CD8-positive, alpha-beta T cell (primary cell): ENCODE measurements at regions of chr6 and their contacts with region 1.

Region 1: DNA sequence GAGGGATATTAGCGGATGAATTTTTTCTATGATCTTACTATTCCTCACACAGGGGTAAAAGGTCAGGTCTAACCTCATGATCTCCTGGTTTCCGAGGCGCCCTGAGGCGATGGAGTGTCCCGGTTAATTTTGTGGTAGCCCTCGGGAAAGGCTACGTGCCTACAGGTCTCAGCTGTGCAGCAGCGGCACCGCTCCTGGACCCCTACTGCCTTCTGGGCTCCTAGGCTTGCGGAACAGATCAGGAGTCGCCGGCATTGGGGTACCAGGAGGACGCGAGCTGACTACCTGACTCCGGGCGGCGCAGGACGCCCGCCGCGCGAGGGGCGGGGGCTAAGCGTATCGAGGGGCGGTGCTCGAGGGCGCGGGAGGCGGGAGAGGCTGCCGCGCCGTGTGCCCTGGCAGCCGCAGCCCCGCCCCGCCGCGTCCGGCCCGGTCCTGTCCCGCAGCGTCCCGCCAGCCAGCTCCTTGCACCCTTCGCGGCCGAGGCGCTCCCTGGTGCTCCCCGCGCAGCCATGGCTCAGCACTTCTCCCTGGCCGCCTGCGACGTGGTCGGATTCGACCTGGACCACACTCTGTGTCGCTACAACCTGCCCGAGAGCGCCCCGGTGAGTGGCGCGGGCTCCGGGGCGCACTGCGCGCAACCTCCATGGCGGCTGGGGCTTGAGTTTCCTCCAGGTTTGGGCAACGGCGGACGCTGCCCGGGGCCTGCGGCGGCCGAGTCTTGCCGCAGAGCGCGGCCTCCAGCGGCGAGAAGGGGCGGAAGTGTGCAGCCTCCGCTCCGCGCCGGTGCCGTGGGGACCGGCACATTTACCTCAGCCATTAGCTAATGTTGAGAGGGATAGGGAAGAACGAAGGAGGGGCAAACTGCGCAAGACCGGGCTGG is at the start of gene NT5DC1:
- DNase-seq: peak; percentile 67 to 91 (median 83)
- ATAC-seq: peak; percentile 93
- H3K4me3 ChIP-seq: peak within 1 kb of the TSS; percentile 74 to 87
- H3K4me3 Mint-ChIP-seq: peak within 1 kb of the TSS; percentile 93
- H3K27ac ChIP-seq: peak within 1 kb of the TSS; percentile 76 to 83
- H3K27ac Mint-ChIP-seq: peak within 1 kb of the TSS; percentile 90
- H3K4me1 ChIP-seq: peaks cover 46% of the 10 kb centered on the region
- H3K4me1 Mint-ChIP-seq: peaks cover 54% of the 10 kb centered on the region
- H3K27me3 ChIP-seq: no peaks in the 10 kb centered on the region
- H3K27me3 Mint-ChIP-seq: no peaks in the 10 kb centered on the region
- CTCF ChIP-seq: peak; percentile 55
- total RNA-seq, gene NT5DC1: 19.2 to 23.3 TPM

Region 2: GRCh38 chr6:116010790-116011401 is 89.8 kb before region 1 on chr6:
- CTCF ChIA-PET with region 1: interaction called, 14 read pairs
- POLR2A ChIA-PET with region 1: interaction called, 4 read pairs
- intact Hi-C with region 1: loop called in 1 of 2 experiments (anchors 1 kb)
- DNase-seq: peak in 8 of 9 experiments; percentile 4 to 57 (median 38)
- ATAC-seq: peak; percentile 54
- H3K4me3 ChIP-seq: no peak overlapping the region
- H3K4me3 Mint-ChIP-seq: no peak overlapping the region
- H3K27ac ChIP-seq: no peak overlapping the region
- H3K27ac Mint-ChIP-seq: no peak overlapping the region
- H3K4me1 ChIP-seq: no peaks in the 10 kb centered on the region
- H3K4me1 Mint-ChIP-seq: no peaks in the 10 kb centered on the region
- H3K27me3 ChIP-seq: no peaks in the 10 kb centered on the region
- H3K27me3 Mint-ChIP-seq: peaks cover 17% of the 10 kb centered on the region
- CTCF ChIP-seq: peak; percentile 71

Region 3: GRCh38 chr6:116217069-116217468 is 116.4 kb after region 1 on chr6:
- CTCF ChIA-PET with region 1: interaction called, 3 read pairs
- POLR2A ChIA-PET with region 1: no interaction called
- intact Hi-C with region 1: loop called in 1 of 2 experiments (anchors 5 kb)
- DNase-seq: peak in 2 of 9 experiments; percentile 52 to 59
- ATAC-seq: peak; percentile 87
- H3K4me3 ChIP-seq: no peak overlapping the region
- H3K4me3 Mint-ChIP-seq: no peak overlapping the region
- H3K27ac ChIP-seq: no peak overlapping the region
- H3K27ac Mint-ChIP-seq: peak overlapping the region; percentile 27
- H3K4me1 ChIP-seq: no peaks in the 10 kb centered on the region
- H3K4me1 Mint-ChIP-seq: peaks cover 5% of the 10 kb centered on the region
- H3K27me3 ChIP-seq: no peaks in the 10 kb centered on the region
- H3K27me3 Mint-ChIP-seq: no peaks in the 10 kb centered on the region
- CTCF ChIP-seq: peak; percentile 69

Region 4: DNA sequence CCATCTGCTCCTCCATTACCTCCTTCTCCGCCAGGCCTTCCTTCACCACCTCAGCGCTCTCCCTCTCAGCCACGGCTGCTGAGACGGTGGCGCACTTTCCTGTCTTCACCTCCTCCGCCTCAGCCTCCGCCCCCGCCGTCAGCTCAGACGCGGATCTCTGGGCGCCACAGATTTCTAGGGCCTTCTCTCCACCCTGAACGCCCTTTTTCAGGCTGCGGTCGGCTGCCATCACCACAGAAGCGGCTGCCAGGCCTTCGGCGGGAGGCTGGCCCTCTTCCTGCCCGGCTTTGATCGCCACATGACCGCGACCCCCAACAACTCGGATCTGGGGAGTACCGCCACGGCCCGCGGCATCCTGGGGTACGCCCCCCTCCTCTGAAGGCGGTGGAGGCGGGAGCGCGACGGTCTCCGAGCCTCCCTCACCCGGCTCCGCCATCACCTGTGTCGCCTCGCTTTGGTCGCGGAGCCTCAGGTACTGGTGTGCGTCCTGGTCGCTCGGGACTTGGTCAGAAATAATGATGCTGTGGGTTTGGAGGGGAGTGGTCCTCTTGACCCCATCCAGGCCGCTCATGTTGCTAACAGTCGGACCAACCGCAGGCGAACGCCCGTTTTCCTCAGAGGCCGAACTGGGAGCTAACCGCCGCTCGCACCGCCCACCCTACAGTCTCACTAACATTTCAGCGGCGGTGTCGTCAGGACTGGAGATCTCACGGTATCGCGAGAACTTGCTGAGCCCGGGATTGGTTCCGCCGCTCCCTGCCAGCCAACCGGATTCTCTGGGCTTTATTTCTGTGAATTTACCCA is 178.8 kb after region 1 on chr6 and contains the start of gene TSPYL1:
- CTCF ChIA-PET with region 1: no interaction called
- POLR2A ChIA-PET with region 1: interaction called, 7 read pairs
- intact Hi-C with region 1: loop called (anchors 1 to 10 kb)
- DNase-seq: peak; percentile 88 to 99 (median 94)
- ATAC-seq: peak; percentile 82
- H3K4me3 ChIP-seq: peak within 1 kb of the TSS; percentile 79 to 98
- H3K4me3 Mint-ChIP-seq: peak within 1 kb of the TSS; percentile 97
- H3K27ac ChIP-seq: peak within 1 kb of the TSS; percentile 97 to 100
- H3K27ac Mint-ChIP-seq: peak within 1 kb of the TSS; percentile 99
- H3K4me1 ChIP-seq: peaks cover 55% of the 10 kb centered on the region
- H3K4me1 Mint-ChIP-seq: peaks cover 62% of the 10 kb centered on the region
- H3K27me3 ChIP-seq: no peaks in the 10 kb centered on the region
- H3K27me3 Mint-ChIP-seq: no peaks in the 10 kb centered on the region
- CTCF ChIP-seq: no peak
- total RNA-seq, gene TSPYL1: 247 to 248 TPM

Region 5: GRCh38 chr6:116667623-116668022 is 567.0 kb after region 1 on chr6:
- CTCF ChIA-PET with region 1: no interaction called
- POLR2A ChIA-PET with region 1: no interaction called
- intact Hi-C with region 1: loop called in 1 of 2 experiments (anchors 5 kb)
- DNase-seq: no peak
- ATAC-seq: no peak
- H3K4me3 ChIP-seq: peak overlapping the region; percentile 71 to 83
- H3K4me3 Mint-ChIP-seq: peak overlapping the region; percentile 99
- H3K27ac ChIP-seq: peak overlapping the region; percentile 70 to 84
- H3K27ac Mint-ChIP-seq: no peak overlapping the region
- H3K4me1 ChIP-seq: peaks cover 33% of the 10 kb centered on the region
- H3K4me1 Mint-ChIP-seq: peaks cover 44% of the 10 kb centered on the region
- H3K27me3 ChIP-seq: no peaks in the 10 kb centered on the region
- H3K27me3 Mint-ChIP-seq: no peaks in the 10 kb centered on the region
- CTCF ChIP-seq: no peak